ENCODE measurements at regions of chr12 and their contacts with region 1.

Region 1: DNA sequence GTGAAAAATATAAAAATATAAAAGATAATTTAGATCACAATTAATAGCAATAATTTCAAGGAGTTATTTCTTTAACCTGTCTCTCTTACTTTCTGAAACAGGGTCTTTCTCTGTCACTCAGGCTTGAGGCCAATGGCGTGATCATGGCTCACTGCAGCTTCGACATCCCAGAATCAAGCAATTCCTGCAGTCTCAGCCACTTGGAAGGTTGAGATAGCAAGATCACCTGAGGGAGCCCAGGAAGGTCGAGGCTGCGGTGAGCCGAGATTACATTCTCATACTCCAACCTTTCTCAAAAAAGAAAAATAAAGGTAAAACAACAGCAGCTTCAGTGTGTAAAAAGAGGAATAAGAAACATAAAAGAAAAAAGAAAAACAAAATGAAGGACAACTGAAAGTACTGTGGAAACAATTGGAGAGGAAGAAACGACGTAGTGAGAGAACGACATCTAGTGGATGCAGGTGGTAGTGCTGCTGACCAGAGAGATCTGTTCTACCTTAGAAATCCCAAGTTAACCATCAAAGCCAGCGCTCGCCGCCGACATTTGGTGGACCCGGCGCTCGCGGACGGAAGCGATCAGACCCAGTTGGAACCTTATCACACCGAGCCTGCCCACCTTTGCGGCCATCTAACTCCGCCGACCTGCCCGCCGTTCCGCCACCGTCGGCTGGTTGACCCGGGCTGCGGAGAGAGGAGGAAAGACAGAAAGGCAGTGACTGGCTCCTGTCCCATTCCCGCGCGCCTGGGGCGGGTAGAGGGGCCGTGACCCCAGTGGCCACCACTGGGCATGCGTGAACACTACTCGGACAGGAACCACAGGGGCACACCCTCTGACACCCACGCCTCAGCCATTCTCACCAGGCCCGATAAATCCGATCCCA is 196.1 kb downstream of the ALG10 start:
- DNase-seq: peak; percentile 47
- H3K4me3 ChIP-seq: no peak overlapping the region
- H3K27ac ChIP-seq: no peak overlapping the region
- H3K4me1 ChIP-seq: no peaks in the 10 kb centered on the region
- CTCF ChIP-seq: peak; percentile 87

Region 2: DNA sequence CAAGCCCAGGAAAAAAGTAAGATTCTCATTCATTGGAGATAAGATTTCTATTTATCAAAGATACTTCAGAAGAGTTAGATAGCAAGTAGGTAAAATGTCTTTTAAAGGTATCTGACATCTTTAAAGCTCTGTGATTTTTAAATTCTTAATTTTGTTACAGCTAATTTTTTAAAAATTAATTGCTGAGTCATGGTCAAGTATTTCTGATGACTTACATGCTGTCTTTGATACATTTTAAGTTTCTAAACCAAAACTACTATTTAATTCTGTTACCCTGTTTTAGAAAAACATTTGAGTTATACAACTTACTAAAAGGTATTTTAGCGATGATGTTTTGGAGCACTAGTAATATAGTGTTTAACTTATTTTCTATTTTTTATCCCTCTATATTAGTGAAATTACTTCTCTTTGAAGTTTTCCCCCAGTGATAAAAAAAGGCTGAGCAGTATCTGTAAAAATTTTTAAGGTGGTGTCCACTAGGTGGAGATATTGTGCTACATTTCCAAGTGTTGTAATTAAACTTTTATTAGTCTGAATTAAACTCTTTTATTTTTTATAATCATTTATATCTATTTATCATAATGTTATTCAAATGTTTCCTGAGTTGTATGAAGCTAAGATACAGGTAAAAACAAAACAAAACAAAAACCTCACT is 184.7 kb before region 1 on chr12:
- CTCF ChIA-PET with region 1: no interaction called
- POLR2A ChIA-PET with region 1: no interaction called
- intact Hi-C with region 1: loop called (anchors 10 kb)
- DNase-seq: peak; percentile 51
- H3K4me3 ChIP-seq: no peak overlapping the region
- H3K27ac ChIP-seq: no peak overlapping the region
- H3K4me1 ChIP-seq: no peaks in the 10 kb centered on the region
- CTCF ChIP-seq: peak; percentile 82

Region 3: DNA sequence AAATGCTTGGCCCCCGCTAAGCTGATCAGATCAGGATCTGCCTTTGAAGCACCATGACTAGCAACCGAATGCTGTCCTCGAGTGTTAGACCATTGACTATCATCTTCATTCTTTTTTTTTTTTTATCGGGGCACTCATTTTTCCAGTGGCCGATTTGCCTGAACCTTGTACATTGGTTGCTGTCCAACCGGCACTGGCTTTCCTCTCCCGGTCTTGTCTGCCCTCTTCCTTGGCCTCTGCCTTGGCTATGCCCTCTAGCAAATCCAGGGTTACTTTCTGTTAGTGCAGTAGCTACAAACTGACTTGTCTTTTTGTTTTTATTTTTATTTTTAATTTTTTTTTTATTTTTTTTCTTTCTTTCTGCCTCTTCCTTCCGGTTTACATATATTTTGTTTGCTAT is 93.8 kb before region 1 on chr12:
- CTCF ChIA-PET with region 1: no interaction called
- POLR2A ChIA-PET with region 1: no interaction called
- intact Hi-C with region 1: loop called (anchors 1 kb)
- DNase-seq: no peak
- H3K4me3 ChIP-seq: no peak overlapping the region
- H3K27ac ChIP-seq: no peak overlapping the region
- H3K4me1 ChIP-seq: no peaks in the 10 kb centered on the region
- CTCF ChIP-seq: no peak

Region 4: DNA sequence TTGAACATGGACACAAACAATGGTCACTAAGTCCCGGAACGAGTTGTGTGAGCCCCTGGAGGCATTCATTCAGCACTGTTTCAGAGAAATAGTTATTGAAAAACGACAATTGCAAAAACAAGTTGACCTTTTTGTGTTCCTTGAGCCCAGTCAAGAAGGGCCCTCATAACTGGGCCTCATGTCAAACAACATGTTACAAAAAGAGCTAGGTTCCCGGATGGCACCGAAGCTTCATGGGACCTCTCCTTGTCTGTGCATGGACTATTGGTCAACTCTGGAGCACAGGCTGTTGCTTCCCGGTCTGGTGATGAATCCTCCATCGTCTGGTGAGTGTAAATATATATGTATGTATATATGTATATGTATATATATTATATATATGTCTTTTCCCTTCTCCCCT is 19.5 kb before region 1 on chr12:
- CTCF ChIA-PET with region 1: no interaction called
- POLR2A ChIA-PET with region 1: no interaction called
- intact Hi-C with region 1: no loop called
- DNase-seq: no peak
- H3K4me3 ChIP-seq: no peak overlapping the region
- H3K27ac ChIP-seq: no peak overlapping the region
- H3K4me1 ChIP-seq: no peaks in the 10 kb centered on the region
- CTCF ChIP-seq: no peak

Region 5: GRCh38 chr12:34398706-34399630 is 180.6 kb after region 1 on chr12:
- CTCF ChIA-PET with region 1: no interaction called
- POLR2A ChIA-PET with region 1: no interaction called
- intact Hi-C with region 1: no loop called
- DNase-seq: no peak
- H3K4me3 ChIP-seq: no peak overlapping the region
- H3K27ac ChIP-seq: no peak overlapping the region
- H3K4me1 ChIP-seq: no peaks in the 10 kb centered on the region
- CTCF ChIP-seq: no peak